AG04449 (cell line): ENCODE measurements at regions of chr2 and their contacts with region 1.

Region 1: DNA sequence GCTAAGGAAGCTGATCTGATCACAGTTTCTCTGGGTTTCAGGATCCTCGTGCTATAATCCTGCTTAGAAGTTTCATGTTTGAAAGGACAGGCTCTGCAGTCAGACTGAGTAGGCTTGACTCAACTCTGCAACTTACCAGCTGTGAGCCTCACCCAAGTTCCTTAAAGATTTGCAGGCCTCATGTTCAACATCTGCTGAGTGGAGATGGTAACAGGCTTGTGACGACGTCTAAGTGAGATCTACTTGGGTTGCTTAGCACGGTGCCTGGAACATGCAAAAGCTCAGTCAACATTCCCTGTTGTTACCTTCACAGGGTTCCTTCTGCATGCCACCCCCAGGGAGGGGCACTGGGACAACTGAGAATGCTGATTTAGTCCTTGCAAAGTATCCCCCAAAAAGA is 164.2 kb downstream of the C1D start:
- DNase-seq: no peak
- H3K4me3 ChIP-seq: no peak overlapping the region
- CTCF ChIP-seq: no peak

Region 2: GRCh38 chr2:67917332-67918054 is 18.9 kb after region 1 on chr2:
- CTCF ChIA-PET with region 1: interaction called, 10 read pairs
- POLR2A ChIA-PET with region 1: no interaction called
- DNase-seq: peak; percentile 94
- H3K4me3 ChIP-seq: no peak overlapping the region
- CTCF ChIP-seq: no peak

Region 3: GRCh38 chr2:68330691-68331090 is 432.1 kb after region 1 on chr2:
- CTCF ChIA-PET with region 1: no interaction called
- POLR2A ChIA-PET with region 1: no interaction called
- DNase-seq: no peak
- H3K4me3 ChIP-seq: no peak overlapping the region
- CTCF ChIP-seq: no peak